ENCODE measurements at regions of chr5 and their contacts with region 1.

Region 1: DNA sequence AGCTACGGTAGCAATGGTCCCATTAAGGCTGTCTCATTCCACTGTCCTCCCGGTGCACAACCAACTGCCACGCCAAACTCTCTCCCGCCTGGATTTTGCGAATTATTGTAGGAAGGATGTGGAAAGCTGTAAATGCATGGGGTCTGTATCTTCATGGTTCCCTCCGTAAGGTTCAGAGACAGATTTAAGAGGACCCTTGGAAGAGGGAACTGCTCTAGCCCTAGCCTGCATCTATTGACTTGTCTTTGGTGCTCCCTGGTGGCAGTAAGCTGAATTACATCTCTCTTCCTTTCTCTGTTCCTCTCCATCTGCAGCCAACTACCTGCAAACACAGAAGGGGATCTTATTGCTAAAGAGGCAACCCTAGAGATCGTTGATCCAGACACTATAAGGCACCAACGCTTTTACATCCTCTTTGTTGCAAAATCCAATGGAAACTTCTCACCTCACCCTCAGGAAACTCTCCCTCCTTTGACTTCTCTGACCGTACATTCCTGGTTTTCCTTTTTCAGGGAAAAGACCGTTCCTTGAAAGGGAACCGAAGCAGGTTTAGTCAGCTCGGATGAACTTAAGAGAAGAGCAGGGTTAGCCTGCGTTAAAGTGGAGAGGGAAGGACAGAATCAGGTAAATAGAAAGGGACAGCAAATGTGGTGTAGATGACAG is 11.9 kb downstream of the CAPSL start:
- DNase-seq: peak; percentile 43 to 51
- ATAC-seq: peak; percentile 75 to 87; a peak in 5 of 6 replicates
- H3K4me3 ChIP-seq: no peak overlapping the region
- H3K27ac ChIP-seq: no peak overlapping the region
- H3K4me1 ChIP-seq: no peaks in the 10 kb centered on the region
- CTCF ChIP-seq: peak; percentile 79
- EP300 ChIP-seq: no peak
- POLR2A ChIP-seq: no peak
- RAD21 ChIP-seq: peak; percentile 82 to 86

Region 2: DNA sequence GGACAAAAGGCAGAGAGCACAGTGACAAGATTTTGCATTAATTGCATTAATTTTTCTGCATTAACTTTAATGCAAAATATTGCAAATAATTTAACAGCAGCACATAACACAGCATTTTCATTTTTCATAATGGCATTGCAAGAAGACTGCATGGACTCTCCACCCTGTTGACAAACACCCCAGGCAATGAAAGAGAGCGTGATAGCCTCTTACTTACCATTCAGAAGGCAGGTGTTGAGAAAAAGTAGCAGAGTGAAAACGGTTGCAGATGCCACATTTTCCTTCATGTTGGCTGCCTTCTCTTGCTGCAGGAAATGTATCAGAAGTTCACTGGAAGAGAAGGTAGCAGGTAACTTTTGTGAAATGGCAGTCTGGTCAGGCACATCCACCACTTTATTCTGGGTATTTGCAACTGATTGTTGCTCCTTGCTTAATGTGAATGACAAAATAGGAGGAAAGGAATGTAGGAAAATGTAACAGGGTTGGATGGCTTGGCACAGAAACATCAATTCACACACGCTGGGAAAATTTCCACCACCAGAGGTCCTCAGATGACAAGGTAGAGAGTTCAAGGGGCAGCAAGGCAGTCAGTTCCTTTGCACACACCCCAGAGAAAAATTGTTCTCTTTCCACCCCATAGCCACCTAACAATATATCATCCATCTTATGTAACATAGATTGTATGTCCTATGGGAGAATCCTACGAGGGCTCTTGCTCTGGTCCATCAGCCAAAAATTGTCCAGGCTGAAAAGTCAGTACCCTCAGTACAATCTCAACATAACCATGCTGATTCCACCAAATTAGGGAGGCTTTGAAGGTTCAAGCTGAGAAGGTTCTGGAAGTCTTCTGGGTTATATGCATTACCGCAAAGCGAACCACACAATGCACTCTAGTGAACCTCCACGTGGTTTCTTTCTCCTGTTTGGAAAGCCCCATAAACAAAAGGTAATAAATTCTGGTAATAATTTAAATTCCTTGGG is 836.9 kb before region 1 on chr5:
- CTCF ChIA-PET with region 1: interaction called, 32 read pairs
- POLR2A ChIA-PET with region 1: no interaction called
- DNase-seq: peak; percentile 38 to 47
- ATAC-seq: peak; percentile 67 to 87; a peak in 5 of 6 replicates
- H3K4me3 ChIP-seq: no peak overlapping the region
- H3K27ac ChIP-seq: no peak overlapping the region
- H3K4me1 ChIP-seq: no peaks in the 10 kb centered on the region
- CTCF ChIP-seq: peak; percentile 71
- EP300 ChIP-seq: no peak
- POLR2A ChIP-seq: no peak
- RAD21 ChIP-seq: peak; percentile 82 to 86

Region 3: GRCh38 chr5:35651002-35651756 is 275.3 kb before region 1 on chr5:
- CTCF ChIA-PET with region 1: interaction called, 28 read pairs
- POLR2A ChIA-PET with region 1: no interaction called
- DNase-seq: peak; percentile 5 to 46
- ATAC-seq: peak; percentile 90 to 92
- H3K4me3 ChIP-seq: no peak overlapping the region
- H3K27ac ChIP-seq: no peak overlapping the region
- H3K4me1 ChIP-seq: no peaks in the 10 kb centered on the region
- CTCF ChIP-seq: peak; percentile 46
- EP300 ChIP-seq: no peak
- POLR2A ChIP-seq: no peak
- RAD21 ChIP-seq: peak; percentile 28 to 38; a peak in 2 of 5 replicates

Region 4: DNA sequence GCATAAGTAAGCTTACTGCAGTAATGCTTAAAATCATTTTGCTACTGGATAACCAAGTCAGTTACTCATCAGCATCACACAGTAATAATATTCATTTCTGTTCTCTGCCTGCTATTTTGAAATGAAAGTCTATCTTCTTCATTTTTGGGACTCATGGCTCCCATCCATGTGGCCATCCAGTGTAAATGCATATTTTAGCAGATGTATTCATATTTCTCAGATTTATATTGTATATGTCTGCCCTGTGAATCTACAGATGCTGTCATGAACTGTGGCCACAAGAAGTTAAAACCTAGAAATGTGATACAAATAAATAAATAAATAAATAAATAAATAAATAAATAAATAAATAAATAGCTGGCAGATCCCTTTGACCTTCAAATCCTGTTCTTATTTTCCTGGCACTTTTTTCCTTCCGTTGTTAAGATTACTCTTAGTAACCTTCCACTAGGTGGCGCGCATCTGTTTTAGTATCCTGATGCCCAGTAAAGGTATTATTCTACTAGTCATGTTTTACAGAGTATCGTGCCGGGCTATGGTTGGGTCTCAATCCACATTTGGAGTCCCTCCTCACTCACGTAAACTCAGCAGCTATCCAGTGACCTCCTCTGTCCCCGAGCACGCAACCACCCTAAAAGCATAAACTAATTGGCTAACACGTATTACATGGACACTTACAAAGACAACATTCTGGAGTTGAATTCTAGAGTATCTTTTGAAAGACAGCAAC is 149.0 kb before region 1 on chr5:
- CTCF ChIA-PET with region 1: interaction called, 79 read pairs
- POLR2A ChIA-PET with region 1: no interaction called
- DNase-seq: peak; percentile 15 to 76
- ATAC-seq: peak; percentile 71 to 81; a peak in 5 of 6 replicates
- H3K4me3 ChIP-seq: no peak overlapping the region
- H3K27ac ChIP-seq: no peak overlapping the region
- H3K4me1 ChIP-seq: no peaks in the 10 kb centered on the region
- CTCF ChIP-seq: peak; percentile 63
- EP300 ChIP-seq: no peak
- POLR2A ChIP-seq: no peak
- RAD21 ChIP-seq: peak; percentile 41 to 54; a peak in 2 of 5 replicates

Region 5: GRCh38 chr5:35938568-35939227 is 12.2 kb after region 1 on chr5 and contains the start of gene CAPSL:
- CTCF ChIA-PET with region 1: interaction called, 29 read pairs
- POLR2A ChIA-PET with region 1: no interaction called
- DNase-seq: peak in 1 of 2 experiments; percentile 42
- ATAC-seq: no peak; a peak in 1 of 6 replicates
- H3K4me3 ChIP-seq: no peak within 1 kb of the TSS
- H3K27ac ChIP-seq: no peak within 1 kb of the TSS
- H3K4me1 ChIP-seq: no peaks in the 10 kb centered on the region
- CTCF ChIP-seq: no peak
- EP300 ChIP-seq: no peak
- POLR2A ChIP-seq: no peak
- RAD21 ChIP-seq: no peak
- polyA plus RNA-seq, gene CAPSL: not detected in 2 replicates

Region 6: GRCh38 chr5:36041538-36041846 is 115.0 kb after region 1 on chr5:
- CTCF ChIA-PET with region 1: no interaction called
- POLR2A ChIA-PET with region 1: no interaction called
- DNase-seq: no peak
- ATAC-seq: no peak
- H3K4me3 ChIP-seq: no peak overlapping the region
- H3K27ac ChIP-seq: no peak overlapping the region
- H3K4me1 ChIP-seq: no peaks in the 10 kb centered on the region
- CTCF ChIP-seq: no peak
- EP300 ChIP-seq: no peak
- POLR2A ChIP-seq: no peak
- RAD21 ChIP-seq: no peak

Region 7: DNA sequence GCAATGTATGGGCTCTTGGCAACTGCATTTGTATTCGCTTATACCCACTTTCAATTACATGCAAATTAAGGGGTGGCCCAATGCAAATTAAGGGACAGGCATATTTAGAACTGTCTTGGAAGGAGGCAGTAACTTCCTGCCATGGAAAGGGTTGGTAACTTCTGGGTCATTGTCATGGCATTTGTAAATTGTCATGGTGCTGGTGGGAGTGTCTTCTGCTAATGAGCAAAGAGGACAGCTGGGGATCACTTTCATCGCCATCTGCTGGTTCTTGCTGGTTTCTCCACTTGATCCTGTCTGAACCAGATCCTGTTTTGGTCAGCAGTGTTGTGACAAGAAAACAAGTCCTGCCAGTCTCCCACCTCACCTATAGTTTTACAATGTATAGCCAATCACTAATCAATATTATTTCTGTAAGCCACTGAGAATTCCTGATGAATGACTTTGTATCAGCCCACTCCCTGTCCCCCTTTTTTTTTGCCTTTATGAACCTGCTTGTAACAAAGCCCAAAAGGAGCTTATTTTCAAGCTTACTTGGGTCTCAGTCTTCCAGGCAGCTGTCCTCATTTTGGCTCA is 163.6 kb after region 1 on chr5:
- CTCF ChIA-PET with region 1: no interaction called
- POLR2A ChIA-PET with region 1: no interaction called
- DNase-seq: peak in 1 of 2 experiments; percentile 37
- ATAC-seq: peak; percentile 66 to 77; a peak in 5 of 6 replicates
- H3K4me3 ChIP-seq: no peak overlapping the region
- H3K27ac ChIP-seq: no peak overlapping the region
- H3K4me1 ChIP-seq: no peaks in the 10 kb centered on the region
- CTCF ChIP-seq: no peak
- EP300 ChIP-seq: no peak
- POLR2A ChIP-seq: no peak
- RAD21 ChIP-seq: no peak